ENCODE measurements at regions of chr10 and their contacts with region 1.

Region 1: GRCh38 chr10:86585037-86585725 is 63.6 kb upstream of the WAPL start:
- DNase-seq: no peak
- H3K4me3 ChIP-seq: peak overlapping the region in 1 of 4 donors; percentile 34
- H3K27ac ChIP-seq: no peak overlapping the region
- H3K4me1 ChIP-seq: peaks cover 5 to 15% (median 6%) of the 10 kb centered on the region in 3 donors
- H3K27me3 ChIP-seq: no peaks in the 10 kb centered on the region
- CTCF ChIP-seq: peak; percentile 86 to 96 (median 94)
- POLR2A ChIP-seq: no peak

Region 2: DNA sequence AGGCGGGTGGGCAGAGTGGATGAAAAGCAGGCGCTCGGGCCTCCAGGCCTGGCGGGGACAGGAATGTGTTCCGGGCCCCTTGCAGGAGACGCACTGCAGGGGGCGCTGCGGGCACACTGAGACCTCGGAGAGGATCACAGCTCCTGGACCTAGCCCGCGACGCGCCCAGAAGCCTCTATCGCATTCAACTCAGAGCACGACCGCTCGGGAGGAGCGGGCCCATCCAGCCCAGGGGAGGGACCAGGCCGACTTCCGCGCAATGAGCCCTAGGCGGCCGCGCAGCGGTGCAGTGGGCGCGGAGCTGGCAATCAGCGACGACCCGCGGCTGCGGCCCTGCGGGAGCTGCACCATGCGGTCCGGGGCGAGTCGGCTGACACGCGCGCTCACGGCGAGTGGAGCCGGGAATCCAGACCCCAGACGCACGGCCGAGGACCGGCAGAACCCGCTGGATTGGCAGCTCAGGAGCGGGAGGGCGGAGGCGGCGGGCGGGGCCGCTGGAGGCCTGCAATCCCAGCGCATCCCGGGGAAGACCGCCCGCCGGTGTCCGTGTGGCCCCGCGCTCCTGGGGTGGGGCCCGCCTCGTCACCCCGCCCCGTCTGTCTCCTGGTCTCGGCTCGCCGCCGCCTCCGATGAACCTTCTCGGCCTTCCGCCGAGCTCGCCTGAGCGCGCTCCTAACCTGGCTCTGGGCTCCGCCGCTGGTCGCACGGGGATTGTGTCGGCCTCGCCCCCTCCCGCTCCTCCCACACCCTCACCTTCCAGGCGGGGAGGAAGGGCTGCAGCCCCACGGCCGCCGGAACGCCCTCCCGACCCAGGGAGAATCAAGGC is 185.1 kb before region 1 on chr10:
- intact Hi-C with region 1: loop called (anchors 5 kb)
- DNase-seq: peak; percentile 61
- H3K4me3 ChIP-seq: peak overlapping the region; percentile 49 to 71 (median 61)
- H3K27ac ChIP-seq: peak overlapping the region; percentile 45 to 86 (median 84)
- H3K4me1 ChIP-seq: peaks cover 18 to 37% (median 20%) of the 10 kb centered on the region in 3 donors
- H3K27me3 ChIP-seq: peaks cover 0 to 28% (median 0%) of the 10 kb centered on the region in 4 donors
- CTCF ChIP-seq: peak; percentile 88 to 95 (median 92)
- POLR2A ChIP-seq: peak in 1 of 4 donors; percentile 32